CD8-positive, alpha-beta T cell (primary cell): ENCODE measurements at regions of chr3 and their contacts with region 1.

Region 1: DNA sequence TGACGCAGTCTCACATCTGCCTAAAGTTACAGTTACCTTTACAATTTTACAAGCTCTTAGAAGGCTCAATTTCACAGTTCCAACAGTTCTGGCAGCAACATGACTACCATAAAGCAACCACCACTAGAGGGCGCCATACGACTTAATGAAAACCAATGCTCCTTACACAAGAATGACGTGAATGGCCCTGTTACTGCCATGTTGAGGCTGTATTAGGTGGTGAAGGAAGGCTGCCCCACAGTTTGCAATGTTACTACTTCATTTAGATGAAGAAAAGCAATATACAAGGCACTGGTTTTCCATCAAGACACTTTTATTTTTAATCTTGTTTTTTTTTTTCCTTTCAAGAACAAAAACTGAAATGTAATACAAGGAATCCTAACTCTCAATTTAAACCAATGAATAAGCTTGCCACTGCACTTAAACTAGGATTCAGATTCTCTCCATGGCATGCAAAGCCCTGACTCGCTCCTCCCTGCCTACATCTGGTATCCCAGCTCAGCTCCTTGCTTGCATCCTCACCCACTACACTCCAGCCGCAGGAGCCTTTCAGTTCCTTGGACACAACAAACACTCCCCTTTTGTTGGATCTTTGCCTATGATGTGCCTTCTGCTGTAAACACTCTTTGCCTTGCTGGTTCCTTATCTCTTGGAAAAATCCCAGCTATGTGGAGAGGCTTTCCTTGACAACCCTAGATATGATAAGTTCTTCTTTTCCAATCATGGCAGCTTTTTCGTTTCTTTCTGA is 270.7 kb downstream of the GBE1 start:
- DNase-seq: peak; percentile 45 to 76 (median 71)
- ATAC-seq: peak; percentile 69
- H3K4me3 ChIP-seq: no peak overlapping the region
- H3K4me3 Mint-ChIP-seq: no peak overlapping the region
- H3K27ac ChIP-seq: no peak overlapping the region
- H3K27ac Mint-ChIP-seq: no peak overlapping the region
- H3K4me1 ChIP-seq: no peaks in the 10 kb centered on the region
- H3K4me1 Mint-ChIP-seq: peaks cover 2% of the 10 kb centered on the region
- H3K27me3 ChIP-seq: no peaks in the 10 kb centered on the region
- H3K27me3 Mint-ChIP-seq: no peaks in the 10 kb centered on the region
- CTCF ChIP-seq: peak; percentile 84

Region 2: DNA sequence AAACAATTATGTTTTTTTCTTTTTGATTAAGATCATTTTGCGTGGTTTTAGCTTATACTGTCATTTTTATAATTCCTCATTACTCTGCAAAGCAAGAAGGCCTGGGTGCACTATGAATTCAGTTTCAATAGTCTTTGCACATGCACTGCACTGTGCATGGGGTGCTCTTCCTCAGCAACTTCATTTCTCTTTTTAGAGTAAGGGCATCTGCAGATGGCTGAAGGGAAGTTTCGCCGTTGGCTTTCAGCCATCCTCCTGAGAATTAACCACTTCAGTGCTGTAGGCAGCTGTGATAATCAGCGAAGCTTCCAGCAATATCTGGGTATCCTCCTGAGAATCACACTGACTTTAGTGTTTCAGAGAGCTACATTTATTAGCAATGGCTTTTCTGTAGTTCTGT is 14.0 kb before region 1 on chr3:
- CTCF ChIA-PET with region 1: interaction called, 13 read pairs
- POLR2A ChIA-PET with region 1: interaction called, 3 read pairs
- intact Hi-C with region 1: no loop called
- DNase-seq: no peak
- ATAC-seq: no peak
- H3K4me3 ChIP-seq: no peak overlapping the region
- H3K4me3 Mint-ChIP-seq: no peak overlapping the region
- H3K27ac ChIP-seq: no peak overlapping the region
- H3K27ac Mint-ChIP-seq: no peak overlapping the region
- H3K4me1 ChIP-seq: no peaks in the 10 kb centered on the region
- H3K4me1 Mint-ChIP-seq: no peaks in the 10 kb centered on the region
- H3K27me3 ChIP-seq: no peaks in the 10 kb centered on the region
- H3K27me3 Mint-ChIP-seq: no peaks in the 10 kb centered on the region
- CTCF ChIP-seq: no peak